Motor neuron (in vitro differentiated cells): ENCODE measurements at regions of chr10 and their contacts with region 1.

Region 1: GRCh38 chr10:80444646-80445319 is 9.3 kb upstream of the TSPAN14 start:
- ATAC-seq: peak; percentile 79 to 96 (median 90)
- H3K4me3 ChIP-seq: no peak overlapping the region
- H3K27ac ChIP-seq: no peak overlapping the region
- H3K4me1 ChIP-seq: peaks cover 3 to 4% of the 10 kb centered on the region in 2 donors

Region 2: GRCh38 chr10:80382989-80383388 is 61.8 kb before region 1 on chr10:
- in situ Hi-C with region 1: loop called in 1 of 9 experiments (anchors 10 kb)
- ATAC-seq: peak in 5 of 8 experiments; percentile 9 to 60 (median 41)
- H3K4me3 ChIP-seq: no peak overlapping the region
- H3K27ac ChIP-seq: no peak overlapping the region
- H3K4me1 ChIP-seq: no peaks in the 10 kb centered on the region